PC-3 (cell line): ENCODE measurements at regions of chr3 and their contacts with region 1.

Region 1: DNA sequence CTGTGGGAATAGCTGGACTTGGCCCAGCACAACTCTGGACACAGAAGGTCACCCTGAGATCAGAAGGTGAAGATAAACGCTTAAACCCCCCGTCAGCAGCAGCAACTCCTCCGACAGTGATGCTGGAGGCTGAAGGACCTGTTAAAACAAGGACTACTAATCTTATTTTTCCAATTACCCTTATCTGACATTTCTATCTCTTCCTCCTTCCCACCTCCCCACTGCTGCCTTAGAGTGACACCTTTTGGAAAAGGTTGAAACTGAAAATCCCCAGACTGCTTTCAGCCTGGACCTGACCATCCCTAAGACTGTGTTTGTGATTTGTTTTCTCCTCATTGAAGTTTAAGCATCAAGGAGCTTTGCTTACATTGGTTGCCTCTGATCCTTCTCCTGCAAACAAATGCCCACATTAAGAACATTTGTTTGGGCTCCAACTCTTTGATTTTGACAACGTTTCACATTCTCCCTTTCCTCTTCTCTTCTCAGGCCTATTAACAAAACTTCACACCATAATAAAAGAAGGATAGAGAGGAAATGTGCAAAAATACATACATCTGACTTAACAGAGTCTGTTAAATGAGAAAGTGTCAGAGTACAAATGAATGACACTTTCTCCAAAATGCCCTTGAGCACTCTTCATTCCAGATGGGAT is 410.6 kb upstream of the WNT5A start:
- DNase-seq: peak; percentile 72
- ATAC-seq: peak; percentile 76
- H3K4me3 ChIP-seq: no peak overlapping the region
- H3K27ac ChIP-seq: no peak overlapping the region
- H3K4me1 ChIP-seq: peaks cover 16% of the 10 kb centered on the region
- H3K27me3 ChIP-seq: peaks cover 4% of the 10 kb centered on the region; the same call in 1 of the 2 replicates
- CTCF ChIP-seq: peak; percentile 87

Region 2: GRCh38 chr3:54853573-54854404 is 1043.9 kb before region 1 on chr3:
- CTCF ChIA-PET with region 1: no interaction called
- POLR2A ChIA-PET with region 1: no interaction called
- intact Hi-C with region 1: loop called (anchors 2 kb)
- DNase-seq: peak; percentile 62
- ATAC-seq: peak; percentile 93
- H3K4me3 ChIP-seq: no peak overlapping the region
- H3K27ac ChIP-seq: no peak overlapping the region
- H3K4me1 ChIP-seq: peaks cover 13% of the 10 kb centered on the region; the same call in 1 of the 2 replicates
- H3K27me3 ChIP-seq: peaks cover 28% of the 10 kb centered on the region
- CTCF ChIP-seq: peak; percentile 95

Region 3: GRCh38 chr3:55434789-55435188 is 462.9 kb before region 1 on chr3:
- CTCF ChIA-PET with region 1: no interaction called
- POLR2A ChIA-PET with region 1: no interaction called
- intact Hi-C with region 1: no loop called
- DNase-seq: peak; percentile 73
- ATAC-seq: peak; percentile 74
- H3K4me3 ChIP-seq: no peak overlapping the region
- H3K27ac ChIP-seq: no peak overlapping the region
- H3K4me1 ChIP-seq: no peaks in the 10 kb centered on the region
- H3K27me3 ChIP-seq: no peaks in the 10 kb centered on the region
- CTCF ChIP-seq: peak; percentile 83

Region 4: GRCh38 chr3:55620351-55621025 is 277.2 kb before region 1 on chr3:
- CTCF ChIA-PET with region 1: no interaction called
- POLR2A ChIA-PET with region 1: no interaction called
- intact Hi-C with region 1: loop called (anchors 5 kb)
- DNase-seq: peak; percentile 55
- ATAC-seq: peak; percentile 42
- H3K4me3 ChIP-seq: peak overlapping the region; percentile 17; the same call in 1 of the 2 replicates
- H3K27ac ChIP-seq: peak overlapping the region; percentile 44
- H3K4me1 ChIP-seq: peaks cover 48% of the 10 kb centered on the region
- H3K27me3 ChIP-seq: no peaks in the 10 kb centered on the region
- CTCF ChIP-seq: no peak

Region 5: GRCh38 chr3:55746808-55747413 is 150.8 kb before region 1 on chr3:
- CTCF ChIA-PET with region 1: no interaction called
- POLR2A ChIA-PET with region 1: no interaction called
- intact Hi-C with region 1: loop called (anchors 1 kb)
- DNase-seq: peak; percentile 48
- ATAC-seq: no peak
- H3K4me3 ChIP-seq: no peak overlapping the region
- H3K27ac ChIP-seq: no peak overlapping the region
- H3K4me1 ChIP-seq: peaks cover 17% of the 10 kb centered on the region
- H3K27me3 ChIP-seq: no peaks in the 10 kb centered on the region
- CTCF ChIP-seq: peak; percentile 71

Region 6: GRCh38 chr3:56042326-56042951 is 144.7 kb after region 1 on chr3:
- CTCF ChIA-PET with region 1: no interaction called
- POLR2A ChIA-PET with region 1: no interaction called
- intact Hi-C with region 1: loop called (anchors 1 kb)
- DNase-seq: peak; percentile 66
- ATAC-seq: peak; percentile 98
- H3K4me3 ChIP-seq: no peak overlapping the region
- H3K27ac ChIP-seq: no peak overlapping the region
- H3K4me1 ChIP-seq: no peaks in the 10 kb centered on the region
- H3K27me3 ChIP-seq: peaks cover 49% of the 10 kb centered on the region
- CTCF ChIP-seq: peak; percentile 73